ENCODE measurements at regions of chr7 and their contacts with region 1.

Region 1: DNA sequence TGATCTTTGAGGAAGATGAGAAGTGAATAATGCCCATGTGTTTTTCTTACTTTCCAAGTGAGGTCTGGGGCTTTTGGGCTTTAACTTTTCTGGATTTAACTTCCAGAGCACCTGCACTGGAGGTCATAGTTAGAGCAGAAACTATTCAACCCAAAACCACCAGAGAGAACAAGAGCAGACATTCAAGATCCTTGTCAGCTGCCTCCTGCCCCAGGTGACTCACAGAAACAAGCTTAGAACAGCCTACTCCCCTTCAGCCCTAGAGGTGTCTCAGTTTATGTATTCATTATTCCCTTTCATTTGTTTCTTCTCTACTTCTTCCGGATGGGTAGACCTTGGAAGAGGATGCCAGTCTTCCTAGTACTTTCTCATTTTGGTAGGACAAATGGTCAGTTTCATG is 270.5 kb downstream of the CNTNAP2 start:
- DNase-seq: no peak
- H3K4me3 ChIP-seq: no peak overlapping the region
- H3K27ac ChIP-seq: no peak overlapping the region
- H3K4me1 ChIP-seq: no peaks in the 10 kb centered on the region
- H3K27me3 ChIP-seq: no peaks in the 10 kb centered on the region
- CTCF ChIP-seq: no peak
- POLR2A ChIP-seq: no peak

Region 2: GRCh38 chr7:146443102-146443501 is 56.0 kb after region 1 on chr7:
- intact Hi-C with region 1: loop called (anchors 10 kb)
- DNase-seq: no peak
- H3K4me3 ChIP-seq: no peak overlapping the region
- H3K27ac ChIP-seq: no peak overlapping the region
- H3K4me1 ChIP-seq: no peaks in the 10 kb centered on the region
- H3K27me3 ChIP-seq: no peaks in the 10 kb centered on the region
- CTCF ChIP-seq: no peak
- POLR2A ChIP-seq: no peak

Measured in spleen (tissue), 13 donors.